ENCODE measurements at regions of chr1 and their contacts with region 1.

Region 1: DNA sequence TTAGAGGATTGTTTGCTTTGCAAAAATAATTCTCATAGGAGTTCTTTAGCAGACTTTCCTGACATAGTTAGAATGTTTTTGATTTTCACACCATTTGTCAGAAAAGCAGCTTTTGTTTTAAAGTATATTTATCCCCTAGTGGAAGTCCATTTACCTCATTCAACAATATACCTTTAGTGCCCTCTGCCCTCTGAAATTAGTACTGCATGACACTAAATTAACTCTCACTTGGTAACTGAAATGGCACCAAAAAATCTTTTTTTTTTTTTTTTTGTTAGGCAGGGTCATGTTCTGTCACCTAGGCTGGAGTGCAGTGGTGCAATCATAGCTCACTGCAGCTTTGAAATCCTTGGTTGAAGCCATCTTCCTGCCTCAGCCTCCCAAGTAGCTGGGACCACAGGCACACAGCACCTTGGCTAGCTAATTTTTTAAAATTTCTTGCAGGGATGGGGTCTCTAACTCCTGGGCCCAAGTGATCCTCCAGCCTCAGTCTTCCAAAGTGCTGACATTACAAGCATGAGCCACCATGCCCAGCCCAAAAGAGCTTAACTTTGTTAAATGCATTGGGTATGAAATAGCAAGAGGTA is 13.6 kb downstream of the LRRC42 start:
- DNase-seq: peak; percentile 53
- H3K27ac ChIP-seq: no peak overlapping the region
- CTCF ChIP-seq: peak; percentile 60

Region 2: GRCh38 chr1:53860967-53861411 is 98.8 kb before region 1 on chr1:
- CTCF ChIA-PET with region 1: interaction called, 17 read pairs
- POLR2A ChIA-PET with region 1: no interaction called
- DNase-seq: peak; percentile 59
- H3K27ac ChIP-seq: no peak overlapping the region
- CTCF ChIP-seq: peak; percentile 73

Region 3: DNA sequence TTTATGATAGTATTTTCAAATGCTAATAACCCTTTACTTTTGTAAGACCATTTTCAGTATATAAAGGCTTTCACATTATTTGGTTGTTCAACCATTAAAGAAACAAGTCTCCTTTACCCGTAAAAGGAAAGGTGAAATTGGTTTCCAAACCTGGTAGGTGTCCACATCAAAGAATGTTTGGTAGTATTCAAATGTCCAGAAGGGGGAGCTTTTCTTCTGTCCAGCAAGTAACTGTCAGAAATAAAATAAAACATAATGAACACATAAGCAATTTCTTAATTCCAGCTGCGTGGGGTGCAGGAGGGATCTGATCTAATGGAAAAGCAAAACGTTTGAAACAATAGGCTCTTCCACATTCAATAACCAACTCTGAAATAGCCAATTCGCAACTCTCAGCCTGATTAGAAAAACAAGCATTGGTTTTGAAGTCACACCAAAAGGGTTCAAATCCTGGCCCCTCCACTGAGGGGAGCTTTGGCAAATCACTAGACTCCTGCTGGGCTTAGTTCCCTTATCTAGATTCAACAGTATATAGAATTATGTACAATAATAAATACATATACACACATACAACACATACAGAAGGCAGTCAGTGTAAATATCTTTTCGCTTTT is 81.2 kb before region 1 on chr1:
- CTCF ChIA-PET with region 1: interaction called, 23 read pairs
- POLR2A ChIA-PET with region 1: no interaction called
- DNase-seq: peak; percentile 57
- H3K27ac ChIP-seq: no peak overlapping the region
- CTCF ChIP-seq: peak; percentile 74